ENCODE measurements at regions of chr15 and their contacts with region 1.

Region 1: DNA sequence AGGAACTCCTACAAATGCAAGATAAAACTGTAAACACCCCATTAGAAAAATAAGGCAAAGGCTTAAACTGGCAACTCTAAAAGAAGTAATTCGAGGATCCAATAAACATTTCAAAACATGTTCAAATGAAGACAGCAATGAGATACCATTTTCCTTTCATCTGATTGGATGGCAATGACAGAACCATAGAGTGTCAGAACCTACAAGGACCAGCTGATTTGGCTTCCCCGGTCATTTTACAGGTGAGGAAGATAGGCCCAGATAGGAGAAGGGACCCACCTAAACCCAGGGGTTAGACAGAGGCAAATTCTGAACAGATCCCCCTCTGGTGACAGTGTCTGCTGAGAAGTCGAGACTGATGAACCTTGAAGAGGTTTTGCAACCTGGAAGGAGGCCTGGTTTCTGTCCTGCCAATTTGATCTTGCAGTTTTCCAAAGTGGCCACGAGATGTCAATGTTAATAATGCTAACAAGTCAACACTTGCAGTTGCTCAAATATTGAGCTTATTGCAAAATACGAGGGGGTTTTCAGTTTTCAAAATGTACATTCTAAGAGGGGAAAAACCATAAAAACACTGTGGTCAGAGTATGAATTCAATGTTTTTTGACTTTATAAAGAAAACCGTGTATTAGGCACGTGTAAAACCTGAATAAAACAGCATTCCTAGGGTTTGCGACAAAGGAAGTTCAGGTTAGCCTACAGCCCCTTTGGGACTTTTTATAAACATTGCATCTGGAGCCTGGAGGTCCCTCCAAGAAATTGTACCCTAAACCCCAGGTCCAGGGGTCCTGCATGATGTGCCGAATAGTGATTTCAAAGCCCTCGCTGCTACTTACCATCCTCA is 21.5 kb downstream of the CFAP161 start:
- DNase-seq: peak; percentile 30
- H3K4me3 Mint-ChIP-seq: no peak overlapping the region
- H3K27ac Mint-ChIP-seq: no peak overlapping the region
- H3K4me1 Mint-ChIP-seq: peaks cover 16% of the 10 kb centered on the region
- H3K27me3 Mint-ChIP-seq: peaks cover 15% of the 10 kb centered on the region

Region 2: GRCh38 chr15:81174792-81175327 is 19.3 kb after region 1 on chr15:
- CTCF ChIA-PET with region 1: interaction called, 31 read pairs
- POLR2A ChIA-PET with region 1: interaction called, 3 read pairs
- DNase-seq: no peak
- H3K4me3 Mint-ChIP-seq: no peak overlapping the region
- H3K27ac Mint-ChIP-seq: no peak overlapping the region
- H3K4me1 Mint-ChIP-seq: peaks cover 2% of the 10 kb centered on the region
- H3K27me3 Mint-ChIP-seq: peaks cover 34% of the 10 kb centered on the region